WTC11 (cell line): ENCODE measurements at regions of chr22 and their contacts with region 1.

Region 1: GRCh38 chr22:37260901-37261336 is 16.9 kb upstream of the RAC2 start:
- DNase-seq: peak; percentile 74
- ATAC-seq: peak; percentile 69
- H3K4me3 Mint-ChIP-seq: no peak overlapping the region
- H3K27ac Mint-ChIP-seq: no peak overlapping the region
- H3K4me1 Mint-ChIP-seq: peaks cover 19% of the 10 kb centered on the region
- H3K27me3 Mint-ChIP-seq: peaks cover 34% of the 10 kb centered on the region
- CTCF ChIP-seq: peak; percentile 86

Region 2: GRCh38 chr22:36986242-36986821 is 274.6 kb before region 1 on chr22:
- CTCF ChIA-PET with region 1: no interaction called
- POLR2A ChIA-PET with region 1: interaction called, 12 read pairs
- DNase-seq: peak; percentile 74
- ATAC-seq: peak; percentile 46; the same call in 1 of the 2 replicates
- H3K4me3 Mint-ChIP-seq: no peak overlapping the region
- H3K27ac Mint-ChIP-seq: no peak overlapping the region
- H3K4me1 Mint-ChIP-seq: no peaks in the 10 kb centered on the region
- H3K27me3 Mint-ChIP-seq: peaks cover 37% of the 10 kb centered on the region
- CTCF ChIP-seq: peak; percentile 91

Region 3: DNA sequence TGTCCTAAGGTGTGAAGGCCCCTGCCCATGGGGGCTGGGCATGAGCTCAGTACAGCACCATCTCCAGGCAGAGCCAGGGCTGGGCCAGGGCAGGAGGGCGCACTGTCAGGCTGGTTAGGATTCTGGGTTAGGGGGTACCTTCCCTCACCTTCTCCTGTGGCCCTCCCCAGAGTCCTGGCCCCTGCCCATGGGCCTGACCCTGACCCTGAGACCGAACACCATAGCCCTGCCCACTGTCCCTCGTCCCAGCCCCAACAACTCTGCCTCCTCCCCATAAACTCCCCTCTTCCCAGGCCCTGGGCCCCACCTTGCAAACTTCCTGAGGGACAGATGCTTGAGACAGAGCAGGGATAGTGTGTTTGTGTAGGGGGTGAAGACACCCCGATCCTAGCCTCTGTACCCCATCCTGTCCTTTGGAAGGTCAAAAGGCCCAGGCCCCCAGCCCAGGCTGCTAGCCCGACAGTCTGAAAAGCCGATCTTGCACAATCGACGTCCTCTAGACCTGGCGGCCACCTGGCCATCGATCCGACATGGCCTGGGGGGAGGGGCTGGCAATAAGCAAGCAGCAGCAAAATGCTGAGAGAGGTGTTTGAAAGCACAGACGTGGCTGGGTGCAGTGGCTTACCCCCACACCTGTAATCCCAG is 148.7 kb before region 1 on chr22:
- CTCF ChIA-PET with region 1: no interaction called
- POLR2A ChIA-PET with region 1: no interaction called
- DNase-seq: no peak
- ATAC-seq: no peak
- H3K4me3 Mint-ChIP-seq: no peak overlapping the region
- H3K27ac Mint-ChIP-seq: no peak overlapping the region
- H3K4me1 Mint-ChIP-seq: peaks cover 10% of the 10 kb centered on the region
- H3K27me3 Mint-ChIP-seq: no peaks in the 10 kb centered on the region; the same call in 1 of the 2 replicates
- CTCF ChIP-seq: no peak

Region 4: GRCh38 chr22:37199103-37199759 is 61.7 kb before region 1 on chr22:
- CTCF ChIA-PET with region 1: interaction called, 68 read pairs
- POLR2A ChIA-PET with region 1: no interaction called
- DNase-seq: peak; percentile 99
- ATAC-seq: peak; percentile 99
- H3K4me3 Mint-ChIP-seq: peak overlapping the region; percentile 70
- H3K27ac Mint-ChIP-seq: no peak overlapping the region
- H3K4me1 Mint-ChIP-seq: peaks cover 33% of the 10 kb centered on the region
- H3K27me3 Mint-ChIP-seq: 0 out of 2 replicates have a peak, but pooled peaks cover 3% of the 10 kb centered on the region
- CTCF ChIP-seq: peak; percentile 67

Region 5: DNA sequence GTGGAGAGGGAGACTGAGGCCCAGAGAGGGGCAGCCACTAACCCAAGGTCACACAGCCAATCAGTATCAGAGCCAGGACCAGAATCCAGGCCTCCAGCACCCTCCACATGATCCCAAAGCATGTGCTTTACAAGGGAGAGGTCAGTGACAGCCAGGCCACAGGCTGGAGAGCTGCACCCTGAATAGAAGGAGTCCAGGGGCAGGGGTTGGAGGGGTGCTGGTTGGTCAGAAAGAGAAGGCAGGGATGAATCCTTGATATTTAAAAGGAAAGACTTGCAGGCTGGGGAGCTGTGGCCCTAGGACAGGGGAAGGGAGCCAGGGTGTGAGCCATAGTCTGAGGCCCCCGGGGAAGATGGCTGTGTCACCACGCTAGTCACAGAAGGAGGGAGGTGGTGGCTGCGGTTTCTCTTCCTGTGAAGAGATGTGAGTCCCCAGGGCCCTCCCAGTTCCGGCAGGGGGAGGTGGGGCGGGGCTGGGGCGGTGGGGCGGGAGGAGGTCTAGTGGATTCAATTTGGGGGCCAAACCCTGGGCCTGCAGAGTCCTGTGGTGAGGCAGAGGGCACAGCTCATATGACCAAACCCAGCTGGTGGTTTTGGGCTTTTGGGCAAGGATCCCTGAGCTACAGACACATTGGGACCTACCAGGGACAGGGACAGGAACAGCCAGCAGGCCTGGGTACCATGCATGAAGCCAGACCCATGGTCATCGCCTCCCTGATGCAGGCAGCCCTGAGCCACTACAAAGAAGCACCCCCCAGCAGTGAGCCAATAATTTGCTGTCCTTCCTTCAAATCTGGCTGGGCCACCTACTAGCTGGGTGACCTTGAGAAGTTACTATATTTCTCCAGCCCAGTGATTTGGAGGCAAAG is 30.9 kb before region 1 on chr22:
- CTCF ChIA-PET with region 1: interaction called, 15 read pairs
- POLR2A ChIA-PET with region 1: no interaction called
- DNase-seq: no peak
- ATAC-seq: no peak
- H3K4me3 Mint-ChIP-seq: no peak overlapping the region
- H3K27ac Mint-ChIP-seq: no peak overlapping the region
- H3K4me1 Mint-ChIP-seq: peaks cover 3% of the 10 kb centered on the region; the same call in 1 of the 2 replicates
- H3K27me3 Mint-ChIP-seq: no peaks in the 10 kb centered on the region
- CTCF ChIP-seq: no peak

Region 6: DNA sequence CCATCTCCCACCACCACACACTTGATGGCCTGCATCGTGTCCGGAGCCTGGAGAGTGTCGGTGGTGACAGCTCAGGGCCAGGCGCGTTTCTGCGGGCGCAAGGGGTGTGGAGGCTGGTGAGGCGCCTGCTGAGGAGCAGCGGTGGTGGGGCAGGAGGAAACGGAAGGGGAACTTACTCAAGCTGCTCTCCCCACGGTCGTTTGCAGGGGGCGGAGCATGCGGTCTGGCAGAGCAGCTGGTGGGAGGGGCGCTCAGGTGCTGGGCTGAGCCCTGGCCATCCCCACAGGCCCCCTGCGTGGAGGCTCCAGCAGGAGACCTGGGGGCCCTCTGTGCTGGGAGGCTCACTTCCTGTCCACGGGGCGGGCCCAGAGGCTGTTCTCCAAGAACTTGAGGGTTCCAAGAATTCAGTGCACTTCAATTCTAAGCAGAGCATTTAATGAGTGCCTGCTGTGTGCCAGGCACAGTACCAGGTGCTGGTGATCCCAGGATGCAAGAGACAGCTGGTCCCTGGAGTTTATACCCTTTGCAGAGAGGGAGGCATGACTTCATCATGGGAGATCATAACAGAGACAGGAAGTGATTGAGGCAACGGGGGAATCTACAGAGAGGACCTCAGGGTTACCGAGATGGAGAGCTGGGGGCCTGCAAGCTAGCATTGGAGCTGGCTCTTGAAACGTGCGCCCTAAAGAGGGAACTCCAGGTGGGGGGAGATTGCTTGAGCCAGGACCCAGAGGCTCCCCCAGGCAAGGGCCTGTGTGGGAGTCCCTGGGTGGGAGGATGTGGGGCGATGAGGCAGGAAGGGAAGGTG is 16.6 kb before region 1 on chr22 and contains the start of gene RAC2:
- CTCF ChIA-PET with region 1: interaction called, 83 read pairs
- POLR2A ChIA-PET with region 1: no interaction called
- DNase-seq: peak; percentile 57
- ATAC-seq: peak; percentile 71
- H3K4me3 Mint-ChIP-seq: peak within 1 kb of the TSS; percentile 25; the same call in 1 of the 2 replicates
- H3K27ac Mint-ChIP-seq: no peak within 1 kb of the TSS
- H3K4me1 Mint-ChIP-seq: peaks cover 20% of the 10 kb centered on the region
- H3K27me3 Mint-ChIP-seq: no peaks in the 10 kb centered on the region
- CTCF ChIP-seq: no peak
- total RNA-seq, gene RAC2: 3.6 to 4.9 TPM (median 4.9 TPM) in 3 replicates

Region 7: GRCh38 chr22:37273126-37273845 is 12.4 kb after region 1 on chr22:
- CTCF ChIA-PET with region 1: interaction called, 31 read pairs
- POLR2A ChIA-PET with region 1: no interaction called
- DNase-seq: no peak
- ATAC-seq: no peak
- H3K4me3 Mint-ChIP-seq: no peak overlapping the region
- H3K27ac Mint-ChIP-seq: no peak overlapping the region
- H3K4me1 Mint-ChIP-seq: no peaks in the 10 kb centered on the region
- H3K27me3 Mint-ChIP-seq: no peaks in the 10 kb centered on the region
- CTCF ChIP-seq: no peak

Region 8: DNA sequence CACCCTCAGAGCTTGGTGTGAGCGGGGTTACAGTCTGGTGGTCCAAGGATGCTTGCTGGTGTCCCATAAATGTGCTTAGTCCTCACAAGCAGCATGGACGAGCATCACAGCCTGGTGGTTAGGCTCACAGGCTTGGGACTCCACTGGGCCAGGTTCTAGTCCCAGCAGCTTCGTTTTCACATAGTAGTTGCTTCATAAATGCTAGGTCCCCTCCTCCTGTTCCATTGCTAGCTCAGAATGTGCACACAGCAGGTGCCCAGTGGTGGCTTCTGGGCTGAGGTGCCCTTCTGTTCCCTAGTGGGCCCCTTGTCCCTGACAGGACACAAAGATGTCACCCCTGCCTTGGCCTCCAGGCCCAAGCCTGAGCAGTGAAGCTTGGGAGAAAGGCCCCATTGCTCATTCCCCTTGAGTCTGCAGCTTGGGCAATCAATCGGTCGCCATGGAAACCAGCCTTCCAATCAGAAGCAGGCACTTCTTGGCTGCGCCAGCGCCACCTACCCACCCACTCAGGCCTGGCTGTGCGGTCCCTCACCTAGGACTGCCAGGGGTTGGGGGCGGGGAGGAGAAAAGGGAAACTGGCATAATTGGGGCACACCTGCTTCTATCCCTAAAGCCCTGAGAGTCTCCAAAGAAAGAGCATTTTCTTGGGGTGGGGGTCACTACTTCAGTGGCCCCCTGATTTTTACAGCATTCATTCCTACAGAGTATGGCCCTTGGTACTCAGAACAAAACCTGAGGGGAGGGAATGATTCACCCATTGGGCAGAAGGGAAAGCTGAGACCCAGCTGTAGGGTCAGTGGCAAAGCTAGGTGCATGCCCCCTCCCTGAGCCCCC is 69.5 kb after region 1 on chr22:
- CTCF ChIA-PET with region 1: interaction called, 15 read pairs
- POLR2A ChIA-PET with region 1: no interaction called
- DNase-seq: peak; percentile 91
- ATAC-seq: peak; percentile 84
- H3K4me3 Mint-ChIP-seq: no peak overlapping the region
- H3K27ac Mint-ChIP-seq: no peak overlapping the region
- H3K4me1 Mint-ChIP-seq: peaks cover 29% of the 10 kb centered on the region
- H3K27me3 Mint-ChIP-seq: peaks cover 43% of the 10 kb centered on the region
- CTCF ChIP-seq: no peak